ENCODE measurements at regions of chr13 and their contacts with region 1.

Region 1: GRCh38 chr13:25827831-25828465 is 223.9 kb downstream of the SHISA2 start:
- DNase-seq: no peak
- ATAC-seq: no peak
- H3K4me3 Mint-ChIP-seq: no peak overlapping the region
- H3K27ac Mint-ChIP-seq: no peak overlapping the region
- H3K4me1 Mint-ChIP-seq: no peaks in the 10 kb centered on the region
- H3K27me3 Mint-ChIP-seq: no peaks in the 10 kb centered on the region
- CTCF ChIP-seq: no peak

Region 2: DNA sequence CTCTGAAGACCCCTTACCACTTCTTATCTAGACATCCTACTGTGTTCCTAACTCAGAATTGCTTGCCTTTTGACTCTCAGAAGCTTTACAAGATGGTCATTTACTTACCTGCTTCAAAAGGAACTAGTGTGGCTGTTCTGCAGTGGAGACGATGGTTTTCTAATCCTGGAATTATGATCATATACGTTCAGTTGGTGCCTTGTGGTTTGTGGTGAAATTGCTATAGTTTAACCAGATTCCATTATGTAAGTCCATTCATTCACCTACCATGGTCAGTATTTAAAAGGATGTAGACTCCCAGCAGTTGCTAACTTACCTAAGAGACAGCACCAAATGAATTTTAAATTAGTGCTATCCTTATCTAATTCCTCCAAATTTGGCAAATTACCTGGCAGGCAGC is 13.0 kb after region 1 on chr13:
- CTCF ChIA-PET with region 1: interaction called, 10 read pairs
- POLR2A ChIA-PET with region 1: no interaction called
- intact Hi-C with region 1: no loop called
- DNase-seq: no peak
- ATAC-seq: no peak
- H3K4me3 Mint-ChIP-seq: no peak overlapping the region
- H3K27ac Mint-ChIP-seq: no peak overlapping the region
- H3K4me1 Mint-ChIP-seq: no peaks in the 10 kb centered on the region
- H3K27me3 Mint-ChIP-seq: peaks cover 2% of the 10 kb centered on the region
- CTCF ChIP-seq: no peak

Region 3: GRCh38 chr13:25860845-25861244 is 32.9 kb after region 1 on chr13:
- CTCF ChIA-PET with region 1: no interaction called
- POLR2A ChIA-PET with region 1: no interaction called
- intact Hi-C with region 1: no loop called
- DNase-seq: no peak
- ATAC-seq: no peak
- H3K4me3 Mint-ChIP-seq: no peak overlapping the region
- H3K27ac Mint-ChIP-seq: no peak overlapping the region
- H3K4me1 Mint-ChIP-seq: no peaks in the 10 kb centered on the region
- H3K27me3 Mint-ChIP-seq: no peaks in the 10 kb centered on the region
- CTCF ChIP-seq: no peak

Region 4: DNA sequence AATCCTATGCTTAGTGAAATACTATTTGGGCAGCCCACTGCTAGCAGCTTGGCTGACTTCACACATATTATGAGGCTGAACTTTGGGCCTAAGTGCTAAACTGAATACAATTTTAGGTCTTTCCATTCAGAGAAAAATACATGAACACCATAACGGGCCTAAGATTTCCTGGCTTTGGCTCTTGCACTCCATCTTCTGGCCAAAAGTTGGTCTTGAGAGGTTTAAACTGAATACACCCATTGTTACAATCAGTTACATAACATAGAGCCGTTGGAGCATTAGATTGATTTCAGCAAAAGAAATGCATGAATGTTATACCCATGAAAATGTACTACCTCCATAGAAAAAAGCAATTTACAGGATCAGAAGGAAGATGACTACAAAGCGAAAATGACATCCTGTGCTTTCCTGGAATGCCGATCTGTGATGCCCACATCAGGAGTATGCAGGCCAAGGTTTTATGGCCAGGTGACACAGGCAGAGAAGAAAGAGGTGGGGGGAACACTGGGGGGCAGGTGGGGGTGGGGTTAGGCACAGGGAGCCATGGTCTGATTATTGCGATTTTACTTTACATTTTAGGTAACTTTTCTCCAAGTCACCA is 235.0 kb after region 1 on chr13:
- CTCF ChIA-PET with region 1: interaction called, 5 read pairs
- POLR2A ChIA-PET with region 1: no interaction called
- intact Hi-C with region 1: loop called (anchors 5 kb)
- DNase-seq: peak; percentile 58
- ATAC-seq: peak; percentile 42
- H3K4me3 Mint-ChIP-seq: no peak overlapping the region
- H3K27ac Mint-ChIP-seq: no peak overlapping the region
- H3K4me1 Mint-ChIP-seq: no peaks in the 10 kb centered on the region
- H3K27me3 Mint-ChIP-seq: no peaks in the 10 kb centered on the region
- CTCF ChIP-seq: peak; percentile 67

Measured in activated CD8-positive, alpha-beta T cell treated with anti-CD3 and anti-CD28 coated beads for 36 hours (primary cell).